A673 (cell line): ENCODE measurements at regions of chr6 and their contacts with region 1.

Region 1: GRCh38 chr6:103893141-103893581 is 966.6 kb downstream of the HACE1 start:
- DNase-seq: peak; percentile 71
- H3K4me3 ChIP-seq: no peak overlapping the region
- H3K27ac ChIP-seq: peak overlapping the region; percentile 41
- H3K4me1 ChIP-seq: peaks cover 19% of the 10 kb centered on the region
- H3K27me3 ChIP-seq: no peaks in the 10 kb centered on the region
- CTCF ChIP-seq: no peak

Region 2: DNA sequence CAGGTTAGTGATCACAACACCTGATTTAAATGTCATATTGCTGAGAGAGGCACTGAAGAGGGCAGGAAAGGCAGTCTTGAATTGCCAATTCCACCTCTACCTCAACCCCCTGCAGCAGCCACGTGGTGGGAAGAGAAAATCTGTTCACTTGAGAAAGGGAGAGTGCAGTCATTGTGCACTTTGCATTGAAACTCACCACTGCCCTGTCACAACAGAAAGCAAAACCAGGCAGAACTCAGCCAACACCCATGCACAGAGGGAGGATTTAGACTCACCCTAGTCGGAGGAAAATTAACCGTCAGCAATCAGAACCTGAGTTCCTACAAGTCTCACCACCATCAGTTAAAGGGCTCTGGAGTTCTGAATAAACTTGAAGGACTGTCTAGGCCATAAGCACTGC is 73.7 kb before region 1 on chr6:
- CTCF ChIA-PET with region 1: no interaction called
- POLR2A ChIA-PET with region 1: no interaction called
- intact Hi-C with region 1: no loop called
- DNase-seq: no peak
- H3K4me3 ChIP-seq: no peak overlapping the region
- H3K27ac ChIP-seq: no peak overlapping the region
- H3K4me1 ChIP-seq: no peaks in the 10 kb centered on the region
- H3K27me3 ChIP-seq: no peaks in the 10 kb centered on the region
- CTCF ChIP-seq: no peak

Region 3: DNA sequence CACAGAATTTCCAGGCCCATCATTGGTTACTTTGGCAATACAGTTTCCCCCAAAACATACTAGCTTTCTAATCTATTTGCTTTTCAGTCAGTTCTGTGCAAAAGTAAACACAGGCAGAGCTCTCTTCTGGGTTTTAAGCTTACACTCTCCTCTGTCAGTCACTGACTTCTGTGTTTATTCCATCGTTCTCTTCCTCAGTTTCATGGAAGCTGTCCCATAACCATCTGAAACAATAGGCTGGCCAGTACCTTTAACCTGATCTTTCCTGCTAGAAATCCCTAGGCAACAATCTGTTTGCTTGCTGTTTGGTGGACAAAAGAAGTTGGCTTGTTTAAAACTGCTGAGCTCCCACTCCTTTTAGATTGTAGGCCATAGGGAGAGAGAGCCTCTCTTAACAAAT is 535.0 kb after region 1 on chr6:
- CTCF ChIA-PET with region 1: no interaction called
- POLR2A ChIA-PET with region 1: no interaction called
- intact Hi-C with region 1: loop called (anchors 10 kb)
- DNase-seq: no peak
- H3K4me3 ChIP-seq: no peak overlapping the region
- H3K27ac ChIP-seq: no peak overlapping the region
- H3K4me1 ChIP-seq: no peaks in the 10 kb centered on the region
- H3K27me3 ChIP-seq: no peaks in the 10 kb centered on the region
- CTCF ChIP-seq: no peak